ENCODE measurements at regions of chr12 and their contacts with region 1.

Region 1: GRCh38 chr12:32727237-32727636 is 28.5 kb downstream of the YARS2 start:
- DNase-seq: no peak
- ATAC-seq: no peak
- H3K4me3 Mint-ChIP-seq: no peak overlapping the region
- H3K27ac Mint-ChIP-seq: no peak overlapping the region
- H3K4me1 Mint-ChIP-seq: no peaks in the 10 kb centered on the region
- H3K27me3 Mint-ChIP-seq: no peaks in the 10 kb centered on the region
- CTCF ChIP-seq: no peak

Region 2: DNA sequence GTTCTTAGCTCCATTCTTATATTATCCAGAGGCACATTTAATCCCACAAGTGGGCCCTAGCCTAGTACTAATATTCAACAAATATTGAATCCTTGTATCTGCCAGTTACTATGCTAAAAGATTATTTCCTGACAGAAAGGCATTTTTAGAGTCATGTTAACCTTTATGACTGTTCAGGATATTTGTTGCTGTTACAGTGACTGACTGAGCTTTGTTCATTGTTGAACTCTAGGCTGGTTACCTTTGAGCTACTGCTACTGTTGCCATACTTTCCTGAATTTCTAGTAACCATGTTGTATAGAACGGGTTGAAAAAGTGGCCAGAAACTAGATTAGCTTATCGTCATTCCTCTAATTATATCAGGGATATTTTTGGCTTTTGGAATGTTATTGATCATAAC is 18.3 kb before region 1 on chr12:
- CTCF ChIA-PET with region 1: no interaction called
- POLR2A ChIA-PET with region 1: no interaction called
- intact Hi-C with region 1: loop called (anchors 2 kb)
- DNase-seq: no peak
- ATAC-seq: no peak
- H3K4me3 Mint-ChIP-seq: no peak overlapping the region
- H3K27ac Mint-ChIP-seq: no peak overlapping the region
- H3K4me1 Mint-ChIP-seq: no peaks in the 10 kb centered on the region
- H3K27me3 Mint-ChIP-seq: no peaks in the 10 kb centered on the region
- CTCF ChIP-seq: no peak

Measured in activated B cell treated with CpG ODN at 0.5 μM for 24 hours (primary cell).